ENCODE measurements at regions of chr3 and their contacts with region 1.

Region 1: GRCh38 chr3:66998113-66998903 is at the start of gene KBTBD8:
- DNase-seq: peak; percentile 98
- ATAC-seq: peak; percentile 95
- H3K4me3 Mint-ChIP-seq: peak within 1 kb of the TSS; percentile 88
- H3K27ac Mint-ChIP-seq: peak within 1 kb of the TSS; percentile 92
- H3K4me1 Mint-ChIP-seq: peaks cover 30% of the 10 kb centered on the region
- H3K27me3 Mint-ChIP-seq: peaks cover 7% of the 10 kb centered on the region
- total RNA-seq, gene KBTBD8: 8.3 to 9.2 TPM

Region 2: GRCh38 chr3:66220602-66221377 is 777.5 kb before region 1 on chr3 and contains the start of gene SLC25A26:
- CTCF ChIA-PET with region 1: no interaction called
- POLR2A ChIA-PET with region 1: no interaction called
- intact Hi-C with region 1: loop called (anchors 1 to 5 kb)
- DNase-seq: peak; percentile 99
- ATAC-seq: peak; percentile 96
- H3K4me3 Mint-ChIP-seq: peak within 1 kb of the TSS; percentile 86
- H3K27ac Mint-ChIP-seq: peak within 1 kb of the TSS; percentile 92
- H3K4me1 Mint-ChIP-seq: peaks cover 48% of the 10 kb centered on the region
- H3K27me3 Mint-ChIP-seq: no peaks in the 10 kb centered on the region
- total RNA-seq, gene SLC25A26: 14.2 to 22.7 TPM

Region 3: GRCh38 chr3:67018105-67018788 is 19.9 kb after region 1 on chr3:
- CTCF ChIA-PET with region 1: no interaction called
- POLR2A ChIA-PET with region 1: no interaction called
- intact Hi-C with region 1: no loop called
- DNase-seq: peak; percentile 19
- ATAC-seq: no peak
- H3K4me3 Mint-ChIP-seq: no peak overlapping the region
- H3K27ac Mint-ChIP-seq: no peak overlapping the region
- H3K4me1 Mint-ChIP-seq: peaks cover 26% of the 10 kb centered on the region
- H3K27me3 Mint-ChIP-seq: no peaks in the 10 kb centered on the region

Region 4: GRCh38 chr3:67048067-67048714 is 49.9 kb after region 1 on chr3:
- CTCF ChIA-PET with region 1: no interaction called
- POLR2A ChIA-PET with region 1: no interaction called
- intact Hi-C with region 1: no loop called
- DNase-seq: no peak
- ATAC-seq: no peak
- H3K4me3 Mint-ChIP-seq: no peak overlapping the region
- H3K27ac Mint-ChIP-seq: no peak overlapping the region
- H3K4me1 Mint-ChIP-seq: no peaks in the 10 kb centered on the region
- H3K27me3 Mint-ChIP-seq: peaks cover 8% of the 10 kb centered on the region

Region 5: GRCh38 chr3:67083277-67083676 is 85.0 kb after region 1 on chr3:
- CTCF ChIA-PET with region 1: no interaction called
- POLR2A ChIA-PET with region 1: no interaction called
- intact Hi-C with region 1: loop called (anchors 2 to 5 kb)
- DNase-seq: peak; percentile 68
- ATAC-seq: peak; percentile 99
- H3K4me3 Mint-ChIP-seq: peak overlapping the region; percentile 45
- H3K27ac Mint-ChIP-seq: peak overlapping the region; percentile 94
- H3K4me1 Mint-ChIP-seq: peaks cover 22% of the 10 kb centered on the region
- H3K27me3 Mint-ChIP-seq: no peaks in the 10 kb centered on the region

Region 6: DNA sequence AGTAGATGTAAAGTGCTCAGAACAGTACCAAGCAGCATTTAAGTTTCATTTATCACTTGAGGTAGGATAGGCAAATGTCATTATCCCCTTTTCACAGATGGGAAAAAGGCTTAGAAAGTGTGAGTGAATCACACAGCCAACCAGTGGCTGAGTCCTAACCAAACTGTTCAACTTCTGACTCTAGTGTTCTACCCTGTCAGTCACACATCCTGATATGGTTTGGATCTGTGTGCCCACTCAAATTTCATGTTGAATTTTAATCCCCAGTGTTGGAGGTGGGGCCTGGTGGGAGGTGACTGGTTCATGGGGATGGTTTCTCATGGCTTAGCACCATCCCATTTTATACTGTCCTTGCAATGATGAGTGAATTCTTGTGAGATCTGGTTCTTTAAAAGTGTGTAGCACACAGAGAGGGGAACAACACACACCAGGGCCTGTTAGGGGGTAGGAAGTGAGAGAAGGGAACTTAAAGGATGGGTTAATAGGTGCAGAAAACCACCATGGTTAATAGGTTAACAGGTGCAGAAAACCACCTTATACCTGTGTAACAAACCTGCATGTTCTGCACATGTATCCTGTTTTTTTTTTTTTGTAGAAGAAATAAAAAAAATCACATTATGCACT is 351.4 kb after region 1 on chr3:
- CTCF ChIA-PET with region 1: no interaction called
- POLR2A ChIA-PET with region 1: no interaction called
- intact Hi-C with region 1: loop called in 1 of 2 experiments (anchors 1 kb)
- DNase-seq: peak; percentile 67
- ATAC-seq: peak; percentile 94
- H3K4me3 Mint-ChIP-seq: no peak overlapping the region
- H3K27ac Mint-ChIP-seq: no peak overlapping the region
- H3K4me1 Mint-ChIP-seq: peaks cover 17% of the 10 kb centered on the region
- H3K27me3 Mint-ChIP-seq: peaks cover 10% of the 10 kb centered on the region

Region 7: GRCh38 chr3:68249265-68249664 is 1251.0 kb after region 1 on chr3:
- CTCF ChIA-PET with region 1: no interaction called
- POLR2A ChIA-PET with region 1: no interaction called
- intact Hi-C with region 1: loop called in 1 of 2 experiments (anchors 1 kb)
- DNase-seq: peak; percentile 48
- ATAC-seq: peak; percentile 99
- H3K4me3 Mint-ChIP-seq: no peak overlapping the region
- H3K27ac Mint-ChIP-seq: no peak overlapping the region
- H3K4me1 Mint-ChIP-seq: peaks cover 10% of the 10 kb centered on the region
- H3K27me3 Mint-ChIP-seq: peaks cover 5% of the 10 kb centered on the region

Measured in activated CD4-positive, alpha-beta T cell treated with anti-CD3 and anti-CD28 coated beads for 36 hours (primary cell).